ENCODE measurements at regions of chr11 and their contacts with region 1.

Region 1: DNA sequence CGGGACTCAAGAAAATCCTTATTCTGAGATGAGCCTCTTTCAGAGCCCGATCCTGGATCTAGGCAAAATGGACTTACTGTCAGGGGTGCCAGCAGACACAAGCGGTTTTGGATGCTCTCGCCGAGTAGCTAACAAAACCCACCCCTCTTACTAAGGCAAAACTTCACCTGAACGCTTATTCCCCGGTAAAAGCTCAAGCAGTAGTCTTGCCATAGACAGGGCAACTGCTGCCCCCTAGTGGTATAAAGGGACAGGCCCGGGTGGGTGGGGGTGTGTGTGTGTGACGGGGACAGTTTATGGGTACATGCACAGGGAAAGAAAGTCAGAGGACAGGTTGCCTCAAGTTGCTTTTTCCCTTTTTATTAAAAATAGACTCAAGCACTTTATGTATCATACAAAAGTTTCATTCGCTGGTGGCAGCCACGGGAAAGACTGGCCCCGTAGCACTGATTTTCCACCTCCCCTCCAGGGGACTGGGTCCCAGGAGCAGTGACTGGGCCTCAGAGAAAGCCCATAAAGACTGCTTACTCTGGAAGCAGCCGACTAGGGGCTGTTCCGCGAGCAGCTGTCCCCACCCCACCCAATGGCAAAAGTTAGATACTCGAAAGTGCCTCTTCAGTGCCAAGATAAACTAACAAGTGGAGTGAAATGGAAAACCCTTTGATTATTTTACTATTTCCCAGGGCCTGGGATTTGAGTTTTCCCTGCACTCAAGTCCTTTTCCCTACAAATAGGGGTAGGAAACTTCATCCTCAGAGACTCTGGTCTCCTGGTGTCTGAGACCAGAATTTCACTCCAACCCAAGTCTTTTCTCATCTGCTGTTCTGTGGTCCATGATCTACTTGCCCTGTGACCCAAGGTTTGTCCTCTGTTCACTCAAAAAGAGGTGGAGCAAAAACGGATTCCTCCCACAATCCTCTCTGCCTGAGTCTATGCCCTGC is 4.7 kb downstream of the YPEL4 start:
- DNase-seq: peak; percentile 91
- ATAC-seq: peak; percentile 86
- H3K4me3 Mint-ChIP-seq: no peak overlapping the region
- H3K27ac Mint-ChIP-seq: no peak overlapping the region
- H3K4me1 Mint-ChIP-seq: peaks cover 51% of the 10 kb centered on the region
- H3K27me3 Mint-ChIP-seq: peaks cover 53% of the 10 kb centered on the region

Region 2: GRCh38 chr11:57493507-57494503 is 151.2 kb before region 1 on chr11:
- CTCF ChIA-PET with region 1: interaction called, 46 read pairs
- POLR2A ChIA-PET with region 1: interaction called, 4 read pairs
- DNase-seq: peak; percentile 82
- ATAC-seq: peak; percentile 79
- H3K4me3 Mint-ChIP-seq: no peak overlapping the region
- H3K27ac Mint-ChIP-seq: peak overlapping the region; percentile 86
- H3K4me1 Mint-ChIP-seq: peaks cover 12% of the 10 kb centered on the region
- H3K27me3 Mint-ChIP-seq: no peaks in the 10 kb centered on the region

Region 3: DNA sequence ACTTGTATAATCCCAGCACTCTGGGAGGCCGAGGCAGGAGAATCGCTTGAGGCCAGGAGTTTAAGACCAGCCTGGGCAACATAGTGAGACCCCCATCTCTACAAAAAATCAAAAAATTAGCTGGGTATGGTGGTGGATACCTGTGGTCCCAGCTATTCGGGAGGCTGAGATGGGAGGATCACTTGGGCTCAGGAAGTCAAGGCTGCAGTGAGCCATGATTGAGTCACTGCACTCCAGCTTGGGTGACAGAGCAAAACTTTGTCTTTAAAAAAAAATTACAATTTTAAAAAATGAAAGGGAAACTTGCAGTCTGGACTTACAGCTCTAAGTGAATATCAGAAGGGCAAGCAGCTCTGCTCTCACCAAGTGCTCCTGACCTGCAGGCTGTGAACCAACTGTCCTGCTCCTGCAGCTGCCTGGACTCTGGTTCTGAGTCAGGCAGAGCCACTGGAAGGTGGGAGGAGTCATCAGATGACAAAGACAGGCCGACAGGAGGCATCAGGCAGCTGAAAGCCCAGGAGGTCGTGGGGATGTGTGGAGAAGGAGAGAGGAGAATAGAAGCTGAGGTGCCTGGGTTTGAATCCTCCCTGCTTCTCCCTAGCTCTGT is 98.0 kb before region 1 on chr11:
- CTCF ChIA-PET with region 1: interaction called, 10 read pairs
- POLR2A ChIA-PET with region 1: no interaction called
- DNase-seq: no peak
- ATAC-seq: no peak
- H3K4me3 Mint-ChIP-seq: no peak overlapping the region
- H3K27ac Mint-ChIP-seq: peak overlapping the region; percentile 60
- H3K4me1 Mint-ChIP-seq: peaks cover 14% of the 10 kb centered on the region
- H3K27me3 Mint-ChIP-seq: no peaks in the 10 kb centered on the region

Region 4: DNA sequence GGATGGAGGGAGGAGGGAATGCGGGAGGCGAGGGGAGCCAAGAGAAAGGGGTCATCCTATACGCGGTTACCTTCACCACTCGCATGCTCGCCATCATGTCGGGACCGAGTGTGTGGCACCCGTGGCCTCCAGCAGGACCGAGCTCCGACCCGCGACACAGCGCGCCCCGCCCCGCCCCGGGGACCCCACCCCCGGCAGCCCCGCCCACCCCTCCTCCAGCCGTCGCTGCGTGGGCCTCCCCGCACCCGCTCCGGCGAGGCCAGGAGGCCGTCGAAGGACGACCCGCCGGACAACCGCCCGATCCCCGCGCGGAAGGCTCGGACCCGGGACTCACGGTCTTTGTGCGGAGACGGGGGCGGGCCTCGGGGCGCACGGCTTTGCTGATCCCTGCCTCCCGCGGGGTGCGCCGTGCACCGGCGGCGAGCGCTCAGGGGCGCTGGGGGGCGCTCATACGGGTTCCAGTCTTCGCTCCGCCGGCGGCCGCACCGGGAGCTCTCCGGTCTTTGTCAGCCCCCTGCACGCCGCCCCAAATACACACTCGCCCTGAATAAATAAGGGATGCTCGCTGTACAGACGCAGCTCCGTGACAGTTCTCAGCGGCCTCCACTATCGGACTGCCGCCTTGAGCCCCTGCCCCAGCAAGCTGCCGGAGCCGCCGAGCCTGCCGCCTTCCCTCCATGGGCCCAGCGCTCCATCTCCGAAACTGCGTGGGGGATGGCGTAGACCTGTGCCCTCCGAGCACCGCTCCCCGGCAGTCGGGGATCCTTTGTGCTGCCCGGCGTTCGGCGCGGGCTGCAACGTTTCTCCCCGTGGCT is 77.3 kb before region 1 on chr11 and contains the start of gene UBE2L6:
- CTCF ChIA-PET with region 1: interaction called, 421 read pairs
- POLR2A ChIA-PET with region 1: interaction called, 34 read pairs
- DNase-seq: peak; percentile 72
- ATAC-seq: peak; percentile 76
- H3K4me3 Mint-ChIP-seq: peak within 1 kb of the TSS; percentile 97
- H3K27ac Mint-ChIP-seq: peak within 1 kb of the TSS; percentile 93
- H3K4me1 Mint-ChIP-seq: peaks cover 47% of the 10 kb centered on the region
- H3K27me3 Mint-ChIP-seq: no peaks in the 10 kb centered on the region
- total RNA-seq, gene UBE2L6: 222 to 232 TPM

Region 5: DNA sequence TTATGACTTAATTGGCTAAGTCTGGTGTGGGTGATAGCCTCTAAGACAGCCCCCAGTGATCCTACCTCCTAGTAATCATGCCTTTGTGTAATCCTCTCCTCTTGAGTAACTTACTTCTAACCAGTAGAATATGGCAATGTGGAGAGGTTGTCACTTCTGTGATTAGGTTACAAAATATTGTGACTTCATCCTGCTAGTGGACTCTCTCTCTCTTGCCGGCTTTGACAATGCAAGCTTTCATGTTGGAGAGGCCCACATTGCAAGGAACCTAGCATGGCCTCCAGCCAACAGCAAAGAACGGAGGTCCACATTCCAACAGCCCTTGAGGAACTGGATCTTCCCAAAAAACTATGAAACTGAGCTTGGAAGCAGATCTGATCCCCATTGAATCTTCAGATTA is 14.8 kb before region 1 on chr11:
- CTCF ChIA-PET with region 1: interaction called, 10 read pairs
- POLR2A ChIA-PET with region 1: no interaction called
- DNase-seq: no peak
- ATAC-seq: no peak
- H3K4me3 Mint-ChIP-seq: no peak overlapping the region
- H3K27ac Mint-ChIP-seq: no peak overlapping the region
- H3K4me1 Mint-ChIP-seq: no peaks in the 10 kb centered on the region
- H3K27me3 Mint-ChIP-seq: peaks cover 30% of the 10 kb centered on the region

Region 6: GRCh38 chr11:57675176-57675941 is 30.3 kb after region 1 on chr11:
- CTCF ChIA-PET with region 1: no interaction called
- POLR2A ChIA-PET with region 1: no interaction called
- DNase-seq: no peak
- ATAC-seq: no peak
- H3K4me3 Mint-ChIP-seq: no peak overlapping the region
- H3K27ac Mint-ChIP-seq: no peak overlapping the region
- H3K4me1 Mint-ChIP-seq: peaks cover 64% of the 10 kb centered on the region
- H3K27me3 Mint-ChIP-seq: no peaks in the 10 kb centered on the region